Dendritic cell treated with granulocyte-macrophage colony-stimulating factor and Interleukin-4, amounts not matched to agents 40 ng/mL and 50 ng/mL, for 4 days (primary cell): ENCODE measurements at regions of chr13 and their contacts with region 1.

Region 1: GRCh38 chr13:52179925-52180324 is 20.5 kb upstream of the NEK3 start:
- H3K4me3 Mint-ChIP-seq: no peak overlapping the region
- H3K27ac Mint-ChIP-seq: no peak overlapping the region
- H3K4me1 Mint-ChIP-seq: no peaks in the 10 kb centered on the region
- H3K27me3 Mint-ChIP-seq: no peaks in the 10 kb centered on the region

Region 2: DNA sequence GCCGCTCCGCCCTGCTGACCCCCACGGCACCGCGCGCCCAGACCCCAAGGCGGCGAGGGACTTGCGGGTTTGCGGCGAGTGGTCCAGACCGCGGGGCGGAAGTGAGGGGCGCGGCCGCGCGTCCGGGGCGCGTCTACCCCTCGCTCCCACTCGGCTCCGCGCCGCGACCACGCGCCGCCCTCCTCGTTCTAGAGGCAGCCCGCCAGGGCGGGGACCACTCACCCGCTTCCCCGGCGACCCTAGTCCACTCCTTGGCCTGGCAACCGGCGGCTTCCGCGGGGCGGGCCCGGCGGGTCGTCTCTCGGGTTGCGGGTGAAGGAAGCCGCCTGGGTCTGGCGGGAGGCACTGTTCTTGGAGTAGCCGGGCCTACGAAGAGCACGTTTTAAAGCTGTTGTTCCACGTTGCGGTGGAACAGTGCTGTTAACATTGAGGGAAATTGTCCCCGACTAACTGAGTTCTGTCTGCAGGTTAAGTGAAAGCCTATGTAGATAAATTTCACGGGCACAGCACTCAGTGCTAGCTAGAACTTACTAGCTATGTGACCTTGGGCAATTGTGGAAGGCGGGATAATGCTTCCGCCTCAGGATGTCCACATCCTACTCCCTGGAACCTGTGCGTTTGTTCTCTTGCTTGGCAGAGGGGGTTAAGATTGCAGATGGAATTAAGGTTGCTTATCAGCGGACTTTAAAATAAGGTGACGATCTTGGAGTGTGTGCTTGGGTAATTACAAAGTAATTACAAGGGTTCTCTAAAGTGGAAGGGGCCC is 20.4 kb before region 1 on chr13 and contains the start of gene NEK3:
- intact Hi-C with region 1: loop called (anchors 2 kb)
- H3K4me3 Mint-ChIP-seq: peak within 1 kb of the TSS; percentile 83
- H3K27ac Mint-ChIP-seq: peak within 1 kb of the TSS; percentile 99
- H3K4me1 Mint-ChIP-seq: peaks cover 72% of the 10 kb centered on the region
- H3K27me3 Mint-ChIP-seq: no peaks in the 10 kb centered on the region